CD4-positive, alpha-beta T cell (primary cell): ENCODE measurements at regions of chr10 and their contacts with region 1.

Region 1: DNA sequence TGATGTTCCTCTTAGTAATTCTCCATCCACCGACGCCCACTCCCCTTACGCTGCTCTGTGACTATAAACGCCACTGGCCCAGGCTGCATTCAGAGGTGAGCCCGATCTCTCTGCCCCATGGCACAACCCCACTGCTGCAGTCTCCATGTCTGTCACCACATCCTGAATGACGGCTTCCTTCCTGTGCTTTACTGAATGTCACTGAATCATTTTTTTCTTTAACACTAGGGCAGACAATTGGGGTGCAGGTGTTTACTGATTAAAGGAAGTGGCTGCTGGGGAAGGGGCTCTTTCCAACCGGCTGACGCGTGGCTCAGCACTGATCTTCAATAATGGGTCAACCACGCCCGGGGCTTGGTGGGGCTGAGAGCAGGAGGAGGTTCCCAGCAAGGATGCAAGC is 208.3 kb downstream of the USP6NL start:
- DNase-seq: peak; percentile 41 to 93 (median 64)
- ATAC-seq: peak; percentile 93
- H3K4me3 ChIP-seq: peak overlapping the region; percentile 25
- H3K4me3 Mint-ChIP-seq: peak overlapping the region; percentile 70
- H3K27ac ChIP-seq: peak overlapping the region; percentile 55 to 62
- H3K27ac Mint-ChIP-seq: peak overlapping the region; percentile 88
- H3K4me1 ChIP-seq: peaks cover 70% of the 10 kb centered on the region
- H3K4me1 Mint-ChIP-seq: peaks cover 82% of the 10 kb centered on the region
- H3K27me3 ChIP-seq: no peaks in the 10 kb centered on the region
- H3K27me3 Mint-ChIP-seq: no peaks in the 10 kb centered on the region
- CTCF ChIP-seq: no peak

Region 2: DNA sequence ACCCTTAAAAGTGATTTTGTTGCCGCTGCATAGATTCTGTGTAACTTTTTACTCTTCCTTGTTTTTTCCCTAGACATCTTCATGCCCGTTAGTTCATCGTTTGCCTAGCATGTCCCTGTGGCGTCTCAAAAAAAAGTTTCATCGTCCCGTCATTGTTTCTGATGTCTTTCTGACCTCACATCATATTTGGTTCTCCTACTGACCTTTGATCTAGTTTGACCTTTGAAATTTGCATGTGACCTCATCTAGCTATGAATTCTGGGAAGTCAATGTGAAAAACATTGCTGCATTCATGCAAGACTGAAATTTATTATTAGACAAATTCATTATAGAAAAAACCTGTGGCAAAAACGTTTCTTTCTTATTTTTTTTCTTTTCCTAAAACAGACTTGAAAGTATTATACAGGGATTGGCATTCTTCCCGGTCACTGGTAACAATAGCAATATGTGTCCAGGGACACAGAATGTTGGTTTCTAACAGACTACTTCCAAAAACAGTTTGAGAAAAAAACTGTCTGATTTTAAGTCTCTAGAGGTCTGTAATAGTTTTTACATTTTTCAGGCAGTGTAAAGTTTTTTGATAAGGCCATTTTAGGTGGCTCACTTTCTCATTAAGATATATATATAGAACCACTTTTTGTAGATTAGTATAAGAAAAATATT is 72.6 kb before region 1 on chr10:
- CTCF ChIA-PET with region 1: no interaction called
- POLR2A ChIA-PET with region 1: interaction called, 4 read pairs
- intact Hi-C with region 1: loop called (anchors 5 kb)
- DNase-seq: no peak
- ATAC-seq: no peak
- H3K4me3 ChIP-seq: no peak overlapping the region
- H3K4me3 Mint-ChIP-seq: no peak overlapping the region
- H3K27ac ChIP-seq: no peak overlapping the region
- H3K27ac Mint-ChIP-seq: peak overlapping the region; percentile 92
- H3K4me1 ChIP-seq: peaks cover 10% of the 10 kb centered on the region
- H3K4me1 Mint-ChIP-seq: peaks cover 83% of the 10 kb centered on the region
- H3K27me3 ChIP-seq: no peaks in the 10 kb centered on the region
- H3K27me3 Mint-ChIP-seq: no peaks in the 10 kb centered on the region
- CTCF ChIP-seq: no peak

Region 3: DNA sequence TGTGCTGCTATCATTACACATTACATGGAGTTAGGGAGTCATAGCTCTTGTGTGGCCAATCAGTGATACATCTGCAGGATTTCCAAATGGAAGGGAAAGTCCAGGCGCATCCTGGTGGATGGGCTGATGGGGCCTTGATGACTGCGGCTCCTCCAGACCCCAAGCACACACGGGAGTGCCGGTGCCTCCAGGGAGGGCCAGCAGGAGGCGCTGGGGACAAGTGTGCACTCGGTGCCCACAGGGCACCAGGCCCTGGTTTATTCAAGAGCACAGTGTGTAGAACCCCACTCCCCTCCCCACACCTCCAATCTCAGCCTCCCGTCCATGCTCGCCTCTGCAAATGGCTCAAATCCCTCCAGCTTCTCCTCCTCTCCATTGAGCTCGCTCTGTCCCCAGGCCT is 35.6 kb before region 1 on chr10:
- CTCF ChIA-PET with region 1: no interaction called
- POLR2A ChIA-PET with region 1: no interaction called
- intact Hi-C with region 1: loop called in 1 of 2 experiments (anchors 5 kb)
- DNase-seq: no peak
- ATAC-seq: no peak
- H3K4me3 ChIP-seq: no peak overlapping the region
- H3K4me3 Mint-ChIP-seq: no peak overlapping the region
- H3K27ac ChIP-seq: no peak overlapping the region
- H3K27ac Mint-ChIP-seq: peak overlapping the region; percentile 82
- H3K4me1 ChIP-seq: peaks cover 15% of the 10 kb centered on the region
- H3K4me1 Mint-ChIP-seq: peaks cover 22% of the 10 kb centered on the region
- H3K27me3 ChIP-seq: no peaks in the 10 kb centered on the region
- H3K27me3 Mint-ChIP-seq: no peaks in the 10 kb centered on the region
- CTCF ChIP-seq: no peak

Region 4: GRCh38 chr10:11424456-11425297 is 21.6 kb after region 1 on chr10:
- CTCF ChIA-PET with region 1: no interaction called
- POLR2A ChIA-PET with region 1: no interaction called
- intact Hi-C with region 1: no loop called
- DNase-seq: no peak
- ATAC-seq: no peak
- H3K4me3 ChIP-seq: no peak overlapping the region
- H3K4me3 Mint-ChIP-seq: no peak overlapping the region
- H3K27ac ChIP-seq: no peak overlapping the region
- H3K27ac Mint-ChIP-seq: peak overlapping the region; percentile 27
- H3K4me1 ChIP-seq: peaks cover 15% of the 10 kb centered on the region
- H3K4me1 Mint-ChIP-seq: peaks cover 21% of the 10 kb centered on the region
- H3K27me3 ChIP-seq: no peaks in the 10 kb centered on the region
- H3K27me3 Mint-ChIP-seq: no peaks in the 10 kb centered on the region
- CTCF ChIP-seq: no peak

Region 5: DNA sequence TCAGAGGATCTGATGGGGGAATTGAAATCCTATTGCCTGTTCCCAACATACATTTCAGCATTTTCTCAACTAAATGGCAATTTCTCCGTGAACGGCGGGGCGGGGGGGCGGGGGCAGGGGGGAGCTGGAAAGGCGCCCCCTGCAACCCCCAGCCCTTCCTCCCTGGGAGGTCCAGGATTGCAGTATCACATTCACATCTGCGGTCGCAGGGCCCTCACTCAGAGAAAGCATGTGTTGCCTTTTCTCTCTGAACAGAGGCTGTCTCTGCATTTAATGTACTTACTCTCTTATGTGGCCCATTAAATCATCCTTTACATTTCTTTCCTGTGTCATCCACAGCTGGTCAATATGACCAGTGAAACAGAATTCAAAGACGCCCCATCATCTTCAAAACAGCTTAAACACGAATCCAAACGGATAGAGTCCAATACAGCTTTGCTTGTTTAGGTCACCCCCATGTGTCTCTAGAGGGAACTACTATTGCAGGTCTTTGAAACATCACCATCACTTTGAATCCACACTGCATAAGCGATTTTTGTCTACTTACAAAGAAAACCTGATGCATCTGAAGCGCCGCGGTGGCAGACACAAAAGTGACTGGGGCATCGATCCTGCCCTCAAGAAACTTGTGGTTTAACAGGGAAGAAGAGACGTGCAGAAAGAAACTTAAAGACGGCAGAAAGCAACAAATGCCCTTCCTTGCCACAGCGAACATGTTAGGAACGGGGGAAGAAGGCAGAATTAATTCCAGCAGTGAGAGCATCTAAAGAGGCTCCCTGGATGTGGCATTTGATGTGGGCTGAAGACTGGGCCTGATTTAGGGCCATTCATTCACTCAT is 322.0 kb after region 1 on chr10:
- CTCF ChIA-PET with region 1: no interaction called
- POLR2A ChIA-PET with region 1: no interaction called
- intact Hi-C with region 1: no loop called
- DNase-seq: peak in 4 of 14 experiments; percentile 18 to 70 (median 52)
- ATAC-seq: peak; percentile 80
- H3K4me3 ChIP-seq: no peak overlapping the region
- H3K4me3 Mint-ChIP-seq: no peak overlapping the region
- H3K27ac ChIP-seq: no peak overlapping the region
- H3K27ac Mint-ChIP-seq: no peak overlapping the region
- H3K4me1 ChIP-seq: no peaks in the 10 kb centered on the region
- H3K4me1 Mint-ChIP-seq: peaks cover 6% of the 10 kb centered on the region
- H3K27me3 ChIP-seq: no peaks in the 10 kb centered on the region
- H3K27me3 Mint-ChIP-seq: no peaks in the 10 kb centered on the region
- CTCF ChIP-seq: peak; percentile 69